HepG2 (cell line): ENCODE measurements at regions of chr9 and their contacts with region 1.

Region 1: DNA sequence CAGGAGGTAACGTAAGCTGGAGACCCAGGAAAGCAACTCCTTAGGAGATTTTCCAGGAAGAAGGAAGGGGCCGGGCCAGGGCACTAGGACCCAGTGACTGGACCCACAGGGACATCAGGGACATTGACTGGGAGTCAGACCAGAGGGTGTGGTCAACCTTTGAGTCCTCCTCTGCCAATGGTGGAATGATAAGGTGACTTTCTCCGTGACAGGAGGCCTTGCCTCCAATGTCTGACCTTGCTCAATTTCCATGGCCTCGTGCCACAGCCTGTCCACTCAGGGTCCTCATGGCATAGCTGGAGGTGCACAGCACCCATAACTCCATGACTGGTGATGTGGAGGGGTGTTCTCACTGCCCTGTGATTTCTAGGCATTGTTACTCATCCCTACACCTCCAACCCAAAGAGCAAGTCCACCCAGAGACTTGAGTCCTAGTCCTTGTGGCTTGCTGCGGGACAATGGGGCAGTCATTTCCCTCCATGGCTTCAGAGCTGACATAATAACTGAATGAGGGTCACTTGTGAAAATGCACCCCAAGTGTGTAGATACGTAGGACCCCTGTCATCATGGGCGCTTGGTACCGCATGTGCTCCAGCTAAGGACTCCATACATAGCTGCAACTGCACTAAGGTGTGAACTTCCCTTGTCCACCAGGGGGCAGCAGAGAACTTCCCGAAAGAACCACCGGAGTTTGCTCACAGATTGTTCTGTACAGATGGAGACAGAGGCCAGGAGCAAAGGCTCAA is 4.1 kb upstream of the AMBP start:
- DNase-seq: peak; percentile 98
- ATAC-seq: peak; percentile 76
- H3K4me3 ChIP-seq: peak overlapping the region; percentile 37 to 69 (median 41); a peak in 5 of 6 replicates
- H3K27ac ChIP-seq: peak overlapping the region; percentile 98
- H3K4me1 ChIP-seq: peaks cover 80% of the 10 kb centered on the region
- H3K27me3 ChIP-seq: no peaks in the 10 kb centered on the region; a peak in 1 of 5 replicates
- CTCF ChIP-seq: peak; percentile 97
- EP300 ChIP-seq: peak in 1 of 2 experiments; percentile 69; a peak in 2 of 4 replicates
- POLR2A ChIP-seq: peak in 1 of 2 experiments; percentile 66; a peak in 2 of 4 replicates
- RAD21 ChIP-seq: peak; percentile 90

Region 2: DNA sequence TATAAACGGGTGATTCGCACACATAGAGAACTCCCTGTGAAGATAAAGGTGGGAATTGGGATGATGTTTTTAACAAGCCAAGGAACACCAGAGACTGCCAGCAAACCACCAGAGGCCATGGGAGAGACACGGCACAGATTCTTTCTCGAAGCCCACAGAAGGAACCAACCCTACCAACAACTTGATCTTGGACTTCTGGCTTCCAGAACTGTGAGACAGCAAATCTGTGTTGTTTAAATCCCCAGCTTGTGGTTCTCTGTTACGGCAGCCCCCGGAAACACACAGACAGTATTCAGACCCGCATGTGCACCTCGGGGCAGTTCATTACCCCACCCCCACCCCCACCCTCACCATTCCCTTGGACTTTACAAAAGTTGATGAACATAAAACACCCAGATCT is 16.9 kb before region 1 on chr9:
- CTCF ChIA-PET with region 1: no interaction called
- POLR2A ChIA-PET with region 1: interaction called, 52 read pairs
- in situ Hi-C with region 1: no loop called
- intact Hi-C with region 1: no loop called
- DNase-seq: no peak
- ATAC-seq: no peak
- H3K4me3 ChIP-seq: no peak overlapping the region
- H3K27ac ChIP-seq: no peak overlapping the region
- H3K4me1 ChIP-seq: peaks cover 98% of the 10 kb centered on the region
- H3K27me3 ChIP-seq: no peaks in the 10 kb centered on the region
- CTCF ChIP-seq: no peak
- EP300 ChIP-seq: no peak
- POLR2A ChIP-seq: no peak
- RAD21 ChIP-seq: no peak

Region 3: DNA sequence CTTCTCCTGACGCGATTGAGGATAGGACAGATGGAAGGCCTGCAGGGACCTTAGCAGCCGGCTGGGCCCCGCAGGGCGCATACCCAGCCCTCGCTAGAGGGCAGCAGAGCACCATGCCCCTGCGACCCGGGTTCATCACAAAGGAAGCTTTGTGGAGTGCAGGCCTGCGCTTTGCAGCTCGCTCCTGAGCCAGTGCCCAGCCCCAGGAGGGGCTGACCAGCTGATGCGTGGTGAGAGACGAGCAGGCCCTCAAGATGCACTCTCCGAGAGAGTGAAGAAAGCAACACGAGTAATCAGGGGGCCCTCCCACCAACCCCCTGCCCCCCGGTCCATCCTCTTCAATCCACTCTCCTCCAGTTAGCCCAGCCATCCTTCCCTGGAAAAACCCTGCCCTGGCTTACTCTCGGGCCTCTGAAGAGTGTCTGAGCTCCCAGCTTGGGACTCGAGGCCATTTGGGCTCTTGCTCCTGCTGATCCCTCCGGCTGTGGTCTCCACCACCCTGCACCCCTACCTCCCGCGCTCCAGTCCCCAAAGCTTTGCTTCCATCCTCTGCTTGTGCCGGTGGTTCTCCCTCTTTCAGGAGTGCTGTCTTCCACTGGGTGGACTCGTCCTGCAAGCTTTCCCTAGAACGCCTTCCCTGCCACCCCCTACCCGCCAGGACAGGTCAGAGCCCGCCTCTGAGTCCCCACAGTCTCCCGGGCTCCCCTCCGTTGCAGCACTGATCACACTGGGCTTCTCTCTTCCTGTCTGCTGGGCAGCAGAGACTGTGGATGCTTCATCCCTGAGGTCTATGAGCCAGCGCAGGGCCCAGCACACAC is 26.0 kb after region 1 on chr9:
- CTCF ChIA-PET with region 1: interaction called, 14 read pairs
- POLR2A ChIA-PET with region 1: interaction called, 31 read pairs
- in situ Hi-C with region 1: no loop called
- intact Hi-C with region 1: loop called (anchors 1 kb)
- DNase-seq: peak; percentile 80
- ATAC-seq: peak; percentile 98
- H3K4me3 ChIP-seq: peak overlapping the region; percentile 40 to 65 (median 40)
- H3K27ac ChIP-seq: no peak overlapping the region
- H3K4me1 ChIP-seq: peaks cover 51% of the 10 kb centered on the region
- H3K27me3 ChIP-seq: no peaks in the 10 kb centered on the region
- CTCF ChIP-seq: peak; percentile 99
- EP300 ChIP-seq: no peak
- POLR2A ChIP-seq: no peak
- RAD21 ChIP-seq: peak; percentile 100

Region 4: GRCh38 chr9:114141553-114142402 is 59.6 kb after region 1 on chr9:
- CTCF ChIA-PET with region 1: no interaction called
- POLR2A ChIA-PET with region 1: interaction called, 20 read pairs
- in situ Hi-C with region 1: no loop called
- intact Hi-C with region 1: no loop called
- DNase-seq: peak; percentile 82
- ATAC-seq: peak; percentile 64
- H3K4me3 ChIP-seq: peak overlapping the region in 1 of 3 experiments; percentile 39; a peak in 2 of 6 replicates
- H3K27ac ChIP-seq: peak overlapping the region; percentile 6
- H3K4me1 ChIP-seq: peaks cover 78% of the 10 kb centered on the region
- H3K27me3 ChIP-seq: no peaks in the 10 kb centered on the region; a peak in 1 of 5 replicates
- CTCF ChIP-seq: no peak
- EP300 ChIP-seq: peak in 1 of 2 experiments; percentile 74; a peak in 2 of 4 replicates
- POLR2A ChIP-seq: no peak
- RAD21 ChIP-seq: no peak

Region 5: DNA sequence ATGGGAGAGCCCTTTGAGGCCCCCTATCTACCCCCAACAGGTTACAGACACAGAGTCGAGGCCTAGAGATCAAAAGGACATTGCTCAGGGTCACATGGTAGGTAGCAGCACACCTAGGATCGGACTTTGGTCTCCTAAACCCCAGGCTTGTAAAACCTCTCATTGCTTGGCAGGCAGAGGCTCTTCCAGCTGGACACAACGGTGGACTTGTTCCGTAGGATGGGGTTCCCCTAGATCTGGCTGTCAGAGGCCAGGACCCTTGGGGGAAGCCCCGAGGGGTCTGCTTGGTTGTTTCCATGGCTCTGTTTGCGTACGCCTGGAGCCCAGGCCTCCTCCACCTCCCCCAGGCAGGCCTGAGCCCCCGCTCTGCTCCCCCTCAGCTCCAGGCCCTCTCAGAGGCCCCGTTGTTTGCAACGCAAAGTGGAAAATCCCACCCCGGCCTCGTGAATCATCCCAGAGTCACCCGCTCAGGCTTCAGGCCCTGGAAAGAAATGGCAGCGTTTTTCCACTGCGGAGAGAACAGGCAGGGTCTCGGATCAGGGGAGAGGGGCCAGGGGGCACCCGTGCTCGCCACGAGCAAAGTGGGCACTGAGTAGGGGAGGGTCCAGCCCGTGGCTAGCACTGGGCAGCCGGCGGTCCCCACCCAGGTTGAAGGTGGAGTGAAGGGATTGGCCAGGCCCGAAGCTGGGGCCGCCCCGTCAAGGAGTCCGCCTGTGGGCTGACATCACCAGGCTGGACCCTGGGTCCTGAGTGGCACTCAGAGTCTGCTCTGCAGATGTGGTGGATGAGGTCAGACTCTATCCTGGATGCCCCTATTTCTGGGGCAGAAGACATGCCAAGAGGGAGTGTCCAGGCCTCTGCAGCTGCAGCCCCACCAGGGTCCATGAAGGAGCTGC is 92.9 kb after region 1 on chr9:
- CTCF ChIA-PET with region 1: no interaction called
- POLR2A ChIA-PET with region 1: interaction called, 75 read pairs
- in situ Hi-C with region 1: no loop called
- intact Hi-C with region 1: loop called (anchors 1 kb)
- DNase-seq: peak; percentile 99
- ATAC-seq: peak; percentile 82
- H3K4me3 ChIP-seq: peak overlapping the region in 2 of 3 experiments; percentile 21 to 53; a peak in 3 of 6 replicates
- H3K27ac ChIP-seq: peak overlapping the region; percentile 98
- H3K4me1 ChIP-seq: peaks cover 70% of the 10 kb centered on the region
- H3K27me3 ChIP-seq: no peaks in the 10 kb centered on the region
- CTCF ChIP-seq: peak; percentile 44
- EP300 ChIP-seq: peak; percentile 66 to 77; a peak in 3 of 4 replicates
- POLR2A ChIP-seq: peak; percentile 78 to 80
- RAD21 ChIP-seq: peak; percentile 5; the same call in 1 of the 2 replicates

Region 6: DNA sequence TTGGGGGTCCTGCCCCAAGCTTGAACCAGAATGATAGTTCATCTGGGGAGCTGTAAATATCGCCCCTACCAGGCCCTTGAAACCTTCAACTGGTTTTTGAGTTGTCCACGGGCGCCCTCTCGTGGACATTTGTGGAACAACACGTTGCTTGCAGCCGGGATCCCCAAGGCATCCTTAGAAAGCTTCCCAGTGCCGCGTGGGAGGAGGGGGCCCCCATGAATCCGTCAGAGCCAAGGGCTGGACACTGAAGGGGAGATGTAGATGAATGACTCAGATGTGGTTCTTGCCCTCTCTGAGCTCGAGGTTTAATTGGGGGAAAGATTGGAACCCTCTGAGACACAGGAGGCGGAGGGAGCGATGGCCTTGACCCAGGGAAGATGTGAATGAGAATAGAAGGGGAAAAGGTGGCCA is 208.9 kb after region 1 on chr9:
- CTCF ChIA-PET with region 1: interaction called, 18 read pairs
- POLR2A ChIA-PET with region 1: interaction called, 24 read pairs
- in situ Hi-C with region 1: no loop called
- intact Hi-C with region 1: loop called (anchors 1 kb)
- DNase-seq: peak; percentile 61
- ATAC-seq: peak; percentile 64
- H3K4me3 ChIP-seq: no peak overlapping the region
- H3K27ac ChIP-seq: no peak overlapping the region
- H3K4me1 ChIP-seq: no peaks in the 10 kb centered on the region
- H3K27me3 ChIP-seq: no peaks in the 10 kb centered on the region
- CTCF ChIP-seq: peak; percentile 88
- EP300 ChIP-seq: no peak
- POLR2A ChIP-seq: no peak
- RAD21 ChIP-seq: peak; percentile 77

Region 7: DNA sequence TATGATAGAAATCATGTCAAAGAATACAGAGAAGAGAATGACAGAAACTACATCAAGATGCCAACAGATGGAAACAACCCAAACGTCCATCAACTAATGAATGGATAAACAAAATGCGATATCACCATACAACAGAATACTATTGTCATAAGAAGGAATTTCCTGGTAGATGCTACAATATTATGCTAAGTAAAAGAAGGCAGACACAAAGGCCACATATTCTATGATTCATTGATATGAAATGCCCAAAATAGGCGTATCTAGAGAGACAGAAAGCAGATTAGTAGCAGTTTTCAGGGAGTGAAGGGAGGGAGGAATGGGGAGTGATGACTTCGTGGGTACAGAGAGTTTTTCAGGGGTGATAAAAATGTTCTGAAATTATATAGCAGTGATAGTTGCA is 363.8 kb after region 1 on chr9:
- CTCF ChIA-PET with region 1: no interaction called
- POLR2A ChIA-PET with region 1: no interaction called
- in situ Hi-C with region 1: no loop called
- intact Hi-C with region 1: no loop called
- DNase-seq: no peak
- ATAC-seq: no peak
- H3K4me3 ChIP-seq: no peak overlapping the region
- H3K27ac ChIP-seq: no peak overlapping the region
- H3K4me1 ChIP-seq: no peaks in the 10 kb centered on the region
- H3K27me3 ChIP-seq: no peaks in the 10 kb centered on the region
- CTCF ChIP-seq: no peak
- EP300 ChIP-seq: no peak
- POLR2A ChIP-seq: no peak
- RAD21 ChIP-seq: no peak